Activated CD8-positive, alpha-beta memory T cell treated with anti-CD3 and anti-CD28 coated beads, Interleukin-2, amount 10 ng/mL, durations not matched to agents 7 days and 5 days (primary cell): ENCODE measurements at regions of chr22 and their contacts with region 1.

Region 1: GRCh38 chr22:22810018-22810427 is 77.6 kb upstream of the IGLL5 start:
- DNase-seq: peak; percentile 84
- ATAC-seq: peak; percentile 98
- H3K4me3 Mint-ChIP-seq: no peak overlapping the region
- H3K27ac Mint-ChIP-seq: no peak overlapping the region
- H3K4me1 Mint-ChIP-seq: peaks cover 3% of the 10 kb centered on the region
- H3K27me3 Mint-ChIP-seq: peaks cover 17% of the 10 kb centered on the region

Region 2: DNA sequence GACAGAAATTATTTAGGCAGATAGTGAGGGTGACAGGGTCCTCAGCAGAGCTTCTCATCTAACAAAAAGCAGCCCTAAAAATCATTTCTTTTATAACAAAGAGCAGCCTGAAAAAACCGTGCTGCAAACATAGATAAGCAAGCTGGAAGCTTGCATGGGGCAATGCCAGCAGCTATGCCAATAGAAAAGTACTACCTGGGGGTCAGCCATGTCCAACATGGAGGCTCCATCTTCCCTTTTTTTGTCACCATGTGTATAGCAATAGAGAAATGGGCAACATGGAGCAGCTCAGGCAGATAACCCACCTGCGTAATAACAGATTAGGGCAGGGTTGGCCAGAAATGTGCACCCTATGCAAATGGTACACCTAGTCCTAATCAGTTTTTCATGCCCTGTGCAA is 20.2 kb after region 1 on chr22:
- CTCF ChIA-PET with region 1: interaction called, 22 read pairs
- DNase-seq: no peak
- ATAC-seq: no peak
- H3K4me3 Mint-ChIP-seq: no peak overlapping the region
- H3K27ac Mint-ChIP-seq: no peak overlapping the region
- H3K4me1 Mint-ChIP-seq: peaks cover under 1% of the 10 kb centered on the region
- H3K27me3 Mint-ChIP-seq: peaks cover 19% of the 10 kb centered on the region

Region 3: DNA sequence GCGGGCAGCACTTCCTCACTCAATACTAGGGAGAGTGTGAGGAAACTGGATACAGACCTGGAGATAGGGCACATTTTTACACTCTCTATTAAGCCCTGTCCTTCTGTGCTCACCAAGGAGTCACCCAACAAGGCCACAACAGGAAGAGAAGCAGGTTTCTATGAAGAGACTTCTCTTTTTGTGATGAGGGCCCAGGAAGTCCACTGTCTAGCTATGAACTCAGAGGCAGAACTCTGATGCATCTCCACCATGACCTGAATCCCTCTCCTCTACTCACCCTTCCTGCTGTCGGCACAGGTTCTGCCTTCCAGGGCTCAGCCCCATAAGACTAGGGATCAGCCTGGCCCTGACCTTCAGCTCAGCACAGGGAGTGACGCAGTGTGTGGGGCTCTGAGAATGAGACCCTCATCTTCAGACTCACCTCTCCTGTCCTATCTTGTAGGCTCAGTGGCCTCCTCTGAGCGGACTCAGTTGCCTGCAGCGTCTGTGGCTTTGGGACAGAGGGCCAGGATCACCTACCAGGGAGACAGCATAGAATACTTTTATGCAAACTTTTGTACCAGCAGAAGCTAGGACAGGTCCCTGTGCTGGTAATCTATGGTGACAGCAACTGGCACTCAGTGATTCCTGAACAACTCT is 28.2 kb after region 1 on chr22:
- CTCF ChIA-PET with region 1: interaction called, 18 read pairs
- DNase-seq: no peak
- ATAC-seq: no peak
- H3K4me3 Mint-ChIP-seq: no peak overlapping the region
- H3K27ac Mint-ChIP-seq: no peak overlapping the region
- H3K4me1 Mint-ChIP-seq: peaks cover 14% of the 10 kb centered on the region
- H3K27me3 Mint-ChIP-seq: peaks cover 9% of the 10 kb centered on the region

Region 4: DNA sequence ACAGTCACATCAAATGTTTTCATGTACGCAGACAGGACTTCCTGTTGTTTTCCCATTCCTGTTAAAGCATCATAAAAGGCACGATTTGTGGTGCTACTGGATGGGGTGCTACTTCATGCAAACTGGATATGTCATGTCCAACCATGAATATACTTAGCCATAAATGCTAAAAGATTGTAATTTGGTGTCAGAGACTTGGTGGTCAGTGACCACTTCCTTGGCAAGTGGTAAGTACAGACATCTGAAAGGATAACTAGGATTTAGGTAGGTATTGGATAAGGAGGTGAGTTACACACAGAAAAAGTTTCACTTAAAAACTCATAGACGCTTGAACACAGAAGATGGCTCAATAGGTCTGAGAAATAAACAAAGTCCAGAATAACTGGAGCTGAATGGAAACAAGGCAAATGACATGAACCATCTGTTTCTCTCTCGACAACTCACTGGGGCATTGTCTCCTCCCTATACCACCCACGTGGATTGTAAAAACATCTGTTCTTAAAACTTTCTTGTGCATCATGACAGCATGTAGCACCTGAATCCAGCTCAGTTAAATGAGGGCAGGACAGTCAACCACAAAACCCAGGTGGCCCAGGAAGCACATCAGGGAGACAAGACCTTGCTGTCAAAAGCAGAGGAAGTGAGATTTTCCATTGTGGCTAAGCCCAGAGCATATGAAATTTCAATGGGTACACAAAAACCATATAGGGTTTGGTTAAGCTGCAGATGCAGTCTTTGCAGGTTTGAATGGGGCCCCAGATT is 55.5 kb after region 1 on chr22:
- CTCF ChIA-PET with region 1: interaction called, 42 read pairs
- DNase-seq: peak; percentile 70
- ATAC-seq: peak; percentile 81
- H3K4me3 Mint-ChIP-seq: peak overlapping the region; percentile 4
- H3K27ac Mint-ChIP-seq: peak overlapping the region; percentile 42
- H3K4me1 Mint-ChIP-seq: peaks cover 30% of the 10 kb centered on the region
- H3K27me3 Mint-ChIP-seq: peaks cover 38% of the 10 kb centered on the region

Region 5: GRCh38 chr22:22870577-22871404 is 60.8 kb after region 1 on chr22:
- CTCF ChIA-PET with region 1: interaction called, 42 read pairs
- DNase-seq: no peak
- ATAC-seq: no peak
- H3K4me3 Mint-ChIP-seq: no peak overlapping the region
- H3K27ac Mint-ChIP-seq: no peak overlapping the region
- H3K4me1 Mint-ChIP-seq: peaks cover 8% of the 10 kb centered on the region
- H3K27me3 Mint-ChIP-seq: peaks cover 40% of the 10 kb centered on the region